IMR-90 (cell line): ENCODE measurements at regions of chr2 and their contacts with region 1.

Region 1: DNA sequence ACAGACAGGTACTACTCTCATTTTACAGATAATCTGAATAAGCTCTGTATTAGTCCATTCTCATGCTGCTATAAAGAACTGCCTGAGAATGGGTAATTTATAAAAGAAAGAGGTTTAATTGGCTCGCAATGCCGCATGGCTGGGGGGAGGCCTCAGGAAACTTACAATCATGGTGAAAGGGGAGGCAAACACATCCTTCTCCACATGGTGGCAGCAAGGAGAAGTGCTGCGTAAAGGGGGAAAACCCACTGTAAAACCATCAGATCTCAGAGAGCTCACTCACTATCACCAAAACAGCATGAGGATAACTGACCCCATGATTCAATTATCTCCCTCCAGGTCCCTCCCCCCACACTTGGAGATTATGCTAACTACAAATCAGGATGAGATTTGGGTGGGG is 254.4 kb downstream of the KCNE4 start:
- DNase-seq: peak; percentile 49
- ATAC-seq: peak; percentile 64; the same call in 1 of the 2 replicates
- H3K4me3 ChIP-seq: no peak overlapping the region
- H3K27ac ChIP-seq: no peak overlapping the region
- H3K4me1 ChIP-seq: no peaks in the 10 kb centered on the region
- H3K27me3 ChIP-seq: no peaks in the 10 kb centered on the region; the same call in 1 of the 2 replicates
- CTCF ChIP-seq: peak; percentile 47
- POLR2A ChIP-seq: no peak
- RAD21 ChIP-seq: peak; percentile 56

Region 2: GRCh38 chr2:223674998-223675609 is 368.7 kb after region 1 on chr2:
- CTCF ChIA-PET with region 1: no interaction called
- POLR2A ChIA-PET with region 1: no interaction called
- dilution Hi-C with region 1: no loop called
- in situ Hi-C with region 1: no loop called
- intact Hi-C with region 1: loop called (anchors 5 kb)
- DNase-seq: peak; percentile 54
- ATAC-seq: peak; percentile 80
- H3K4me3 ChIP-seq: no peak overlapping the region
- H3K27ac ChIP-seq: no peak overlapping the region
- H3K4me1 ChIP-seq: no peaks in the 10 kb centered on the region
- H3K27me3 ChIP-seq: no peaks in the 10 kb centered on the region
- CTCF ChIP-seq: peak; percentile 71
- POLR2A ChIP-seq: no peak
- RAD21 ChIP-seq: peak; percentile 63

Region 3: DNA sequence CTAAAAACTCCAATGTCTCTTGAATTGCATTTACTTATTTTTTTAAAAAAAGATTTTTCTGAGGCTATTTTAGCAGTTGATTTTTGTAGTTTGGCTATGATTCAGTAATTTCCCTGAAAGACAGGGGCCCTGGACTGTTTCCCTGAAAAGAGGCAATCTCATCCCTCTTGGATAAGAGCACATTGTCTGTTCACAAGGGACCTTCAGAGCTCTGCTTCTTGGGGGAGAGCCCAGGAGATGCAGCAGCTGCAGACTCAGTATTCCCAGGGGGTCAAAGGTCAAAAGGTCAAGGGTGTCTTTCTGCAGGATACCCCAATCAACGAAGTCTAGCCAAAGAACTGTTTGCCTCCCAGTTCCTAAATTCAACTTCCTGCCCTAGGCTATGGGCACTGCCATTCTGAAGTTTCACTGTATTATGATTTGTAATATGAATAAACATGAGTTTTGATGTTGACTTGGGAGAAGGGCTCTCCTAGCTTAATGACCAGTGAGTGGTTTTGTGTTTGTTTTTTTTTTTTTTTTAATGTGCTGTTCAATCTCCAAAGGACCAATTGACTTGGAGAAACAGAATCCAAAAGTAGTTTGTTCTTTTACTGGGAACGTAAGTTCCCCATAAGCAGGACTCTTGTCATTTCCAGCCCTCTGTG is 889.7 kb after region 1 on chr2:
- CTCF ChIA-PET with region 1: no interaction called
- POLR2A ChIA-PET with region 1: no interaction called
- dilution Hi-C with region 1: no loop called
- in situ Hi-C with region 1: no loop called
- intact Hi-C with region 1: no loop called
- DNase-seq: no peak
- ATAC-seq: no peak
- H3K4me3 ChIP-seq: no peak overlapping the region
- H3K27ac ChIP-seq: no peak overlapping the region
- H3K4me1 ChIP-seq: no peaks in the 10 kb centered on the region
- H3K27me3 ChIP-seq: peaks cover 2% of the 10 kb centered on the region
- CTCF ChIP-seq: no peak
- POLR2A ChIP-seq: no peak
- RAD21 ChIP-seq: no peak